RWPE1 (cell line): ENCODE measurements at regions of chr15 and their contacts with region 1.

Region 1: GRCh38 chr15:90954712-90955671 is at the start of gene RCCD1:
- DNase-seq: peak; percentile 99
- H3K27ac ChIP-seq: peak within 1 kb of the TSS; percentile 98
- CTCF ChIP-seq: no peak

Region 2: GRCh38 chr15:90931737-90932659 is 23.0 kb before region 1 on chr15 and contains the start of gene HDDC3:
- CTCF ChIA-PET with region 1: interaction called, 12 read pairs
- POLR2A ChIA-PET with region 1: interaction called, 3 read pairs
- DNase-seq: peak; percentile 95
- H3K27ac ChIP-seq: peak within 1 kb of the TSS; percentile 90
- CTCF ChIP-seq: peak; percentile 97

Region 3: DNA sequence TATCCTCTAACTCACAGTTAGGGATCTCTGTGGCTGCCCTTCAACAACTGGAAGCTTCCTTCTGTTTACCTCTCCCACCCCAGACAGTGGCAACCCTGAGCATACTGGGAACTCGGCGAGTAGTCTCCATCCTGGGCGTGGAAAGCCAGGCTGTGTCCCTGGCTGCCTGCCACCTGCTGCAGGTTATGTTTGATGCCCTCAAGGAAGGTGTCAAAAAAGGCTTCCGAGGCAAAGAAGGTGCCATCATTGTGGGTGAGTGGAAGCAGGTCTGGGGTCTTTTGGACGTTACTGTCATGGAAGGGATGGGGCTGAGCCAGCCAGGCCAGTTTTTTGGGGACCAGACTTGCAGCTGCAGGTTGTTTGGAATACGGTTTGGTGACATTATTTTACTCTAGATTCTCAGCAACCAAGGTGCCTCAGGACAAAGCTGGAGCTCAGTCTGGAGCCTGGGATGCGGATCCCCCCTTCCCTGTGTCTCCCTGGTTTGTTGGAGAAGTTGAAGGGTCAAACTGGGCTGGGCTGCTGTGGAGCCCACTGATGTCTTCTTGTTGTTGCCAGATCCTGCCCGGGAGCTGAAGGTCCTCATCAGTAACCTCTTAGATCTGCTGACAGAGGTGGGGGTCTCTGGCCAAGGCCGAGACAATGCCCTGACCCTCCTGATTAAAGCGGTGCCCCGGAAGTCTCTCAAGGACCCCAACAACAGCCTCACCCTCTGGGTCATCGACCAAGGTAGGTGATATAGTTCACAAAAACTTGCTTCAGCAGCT is 12.5 kb before region 1 on chr15:
- CTCF ChIA-PET with region 1: interaction called, 16 read pairs
- POLR2A ChIA-PET with region 1: interaction called, 4 read pairs
- DNase-seq: no peak
- H3K27ac ChIP-seq: no peak overlapping the region
- CTCF ChIP-seq: no peak

Region 4: GRCh38 chr15:91032919-91033803 is 78.2 kb after region 1 on chr15:
- CTCF ChIA-PET with region 1: interaction called, 11 read pairs
- POLR2A ChIA-PET with region 1: no interaction called
- DNase-seq: peak; percentile 26
- H3K27ac ChIP-seq: no peak overlapping the region
- CTCF ChIP-seq: peak; percentile 76

Region 5: GRCh38 chr15:91049378-91050127 is 94.6 kb after region 1 on chr15:
- CTCF ChIA-PET with region 1: interaction called, 23 read pairs
- POLR2A ChIA-PET with region 1: no interaction called
- DNase-seq: peak; percentile 58
- H3K27ac ChIP-seq: no peak overlapping the region
- CTCF ChIP-seq: peak; percentile 91

Region 6: DNA sequence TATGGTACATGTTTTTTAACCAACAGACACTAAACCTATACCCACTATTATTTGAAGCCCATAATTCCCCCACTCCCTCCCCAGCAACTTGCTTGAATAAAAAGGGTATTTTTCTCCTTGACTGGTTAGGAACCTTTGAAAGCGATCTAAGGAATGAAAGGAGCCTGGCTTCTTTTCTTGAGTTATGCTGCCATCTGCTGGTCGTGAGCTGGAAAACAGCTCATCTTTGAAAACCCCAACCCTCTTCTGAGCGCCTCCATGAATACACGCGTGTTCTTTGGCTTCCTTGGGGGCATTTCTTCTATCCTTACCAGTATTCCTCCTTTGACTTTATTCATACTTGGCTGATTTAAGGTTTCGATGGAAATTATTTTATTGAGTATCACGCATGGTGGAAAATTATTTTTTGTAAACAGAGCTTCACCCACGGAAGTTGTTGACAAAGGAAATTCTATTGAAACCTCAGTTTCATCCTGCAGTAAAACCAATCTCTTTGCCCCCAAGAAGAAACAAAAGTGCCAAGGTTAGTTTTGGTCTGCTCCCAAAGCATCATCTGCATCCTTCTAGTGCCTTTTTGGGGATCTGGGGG is 316.7 kb after region 1 on chr15:
- CTCF ChIA-PET with region 1: interaction called, 12 read pairs
- POLR2A ChIA-PET with region 1: no interaction called
- DNase-seq: peak; percentile 67
- H3K27ac ChIP-seq: no peak overlapping the region
- CTCF ChIP-seq: peak; percentile 86

Region 7: DNA sequence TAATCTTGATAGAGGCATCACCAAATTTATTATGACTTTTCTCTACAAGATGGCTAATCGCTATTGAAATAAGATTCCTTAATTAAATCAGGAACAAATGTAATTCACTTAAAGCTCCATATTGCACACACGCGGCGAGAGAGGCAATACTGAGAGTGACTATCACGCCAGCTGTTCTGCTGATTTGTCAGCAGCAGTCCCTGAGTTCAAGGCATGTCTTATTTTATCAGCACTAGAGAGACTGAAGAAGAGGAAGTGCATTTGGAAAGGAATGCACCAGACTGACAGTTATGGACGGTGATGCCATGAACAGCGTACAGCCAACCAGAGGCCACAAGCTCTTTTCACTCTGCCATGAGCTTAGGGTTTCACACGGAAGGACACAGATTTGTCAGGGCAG is 814.9 kb after region 1 on chr15:
- CTCF ChIA-PET with region 1: no interaction called
- POLR2A ChIA-PET with region 1: no interaction called
- DNase-seq: no peak
- H3K27ac ChIP-seq: no peak overlapping the region
- CTCF ChIP-seq: no peak